Activated B cell treated with CpG ODN at 0.5 μM for 24 hours (primary cell): ENCODE measurements at regions of chr3 and their contacts with region 1.

Region 1: DNA sequence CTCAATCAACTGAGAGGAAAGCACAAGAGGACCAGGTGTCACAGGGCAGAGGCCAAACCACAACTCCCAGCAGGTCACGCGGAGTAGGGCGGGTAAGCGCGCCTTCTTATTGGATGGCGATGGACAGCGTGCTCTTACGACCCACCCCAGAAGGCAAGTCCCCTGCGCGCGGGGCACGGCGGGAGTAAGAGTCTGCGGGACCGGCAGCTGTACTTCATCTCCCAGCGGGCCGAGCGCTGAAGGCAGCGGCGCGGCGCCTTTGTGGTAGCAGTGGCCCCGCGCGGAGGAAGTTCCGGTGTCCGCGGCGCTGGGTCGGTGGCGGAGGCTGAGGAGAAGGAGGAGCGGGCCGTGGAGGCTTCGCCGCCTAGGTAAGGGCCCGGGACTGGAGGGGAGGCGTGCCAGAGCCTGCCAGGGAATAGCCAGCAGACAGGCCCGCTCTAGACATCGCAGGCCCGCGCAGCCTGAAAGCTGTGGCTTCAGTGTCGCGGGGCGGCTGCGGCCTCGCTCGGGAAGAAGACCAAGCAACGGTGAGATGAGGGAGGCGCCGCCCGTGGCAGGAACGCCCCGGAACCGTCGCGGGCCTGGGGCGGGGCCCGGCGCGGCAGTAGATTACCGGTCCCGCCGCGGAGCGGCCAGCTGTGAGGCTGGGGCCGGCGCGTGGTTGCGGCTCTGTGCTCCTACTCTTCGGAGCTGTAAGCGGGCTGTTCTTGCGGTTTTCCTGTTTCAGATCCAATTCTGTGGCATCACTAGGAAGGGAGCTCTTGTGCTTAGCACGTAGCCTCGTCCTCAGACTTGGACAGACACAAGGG is at the start of gene RBM6:
- DNase-seq: peak; percentile 89
- ATAC-seq: peak; percentile 93
- H3K4me3 Mint-ChIP-seq: peak within 1 kb of the TSS; percentile 98
- H3K27ac Mint-ChIP-seq: peak within 1 kb of the TSS; percentile 97
- H3K4me1 Mint-ChIP-seq: peaks cover 43% of the 10 kb centered on the region
- H3K27me3 Mint-ChIP-seq: no peaks in the 10 kb centered on the region
- CTCF ChIP-seq: no peak
- total RNA-seq, gene RBM6: 160 and 172 TPM in 2 replicates

Region 2: GRCh38 chr3:49856181-49857005 is 83.7 kb before region 1 on chr3 and contains the start of gene TRAIP:
- CTCF ChIA-PET with region 1: no interaction called
- POLR2A ChIA-PET with region 1: no interaction called
- intact Hi-C with region 1: loop called (anchors 1 kb)
- DNase-seq: peak; percentile 94
- ATAC-seq: peak; percentile 100
- H3K4me3 Mint-ChIP-seq: peak within 1 kb of the TSS; percentile 86
- H3K27ac Mint-ChIP-seq: peak within 1 kb of the TSS; percentile 80
- H3K4me1 Mint-ChIP-seq: peaks cover 15% of the 10 kb centered on the region
- H3K27me3 Mint-ChIP-seq: peaks cover 3% of the 10 kb centered on the region
- CTCF ChIP-seq: no peak
- total RNA-seq, gene TRAIP: 6.4 TPM in 2 replicates

Region 3: GRCh38 chr3:49929331-49930240 is 10.5 kb before region 1 on chr3 and contains the start of gene MON1A:
- CTCF ChIA-PET with region 1: interaction called, 5 read pairs
- POLR2A ChIA-PET with region 1: interaction called, 72 read pairs
- intact Hi-C with region 1: loop called (anchors 1 kb)
- DNase-seq: peak; percentile 92
- ATAC-seq: peak; percentile 95
- H3K4me3 Mint-ChIP-seq: peak within 1 kb of the TSS; percentile 86
- H3K27ac Mint-ChIP-seq: peak within 1 kb of the TSS; percentile 79
- H3K4me1 Mint-ChIP-seq: peaks cover 16% of the 10 kb centered on the region
- H3K27me3 Mint-ChIP-seq: no peaks in the 10 kb centered on the region
- CTCF ChIP-seq: no peak
- total RNA-seq, gene MON1A: 6.3 and 7.1 TPM in 2 replicates

Region 4: DNA sequence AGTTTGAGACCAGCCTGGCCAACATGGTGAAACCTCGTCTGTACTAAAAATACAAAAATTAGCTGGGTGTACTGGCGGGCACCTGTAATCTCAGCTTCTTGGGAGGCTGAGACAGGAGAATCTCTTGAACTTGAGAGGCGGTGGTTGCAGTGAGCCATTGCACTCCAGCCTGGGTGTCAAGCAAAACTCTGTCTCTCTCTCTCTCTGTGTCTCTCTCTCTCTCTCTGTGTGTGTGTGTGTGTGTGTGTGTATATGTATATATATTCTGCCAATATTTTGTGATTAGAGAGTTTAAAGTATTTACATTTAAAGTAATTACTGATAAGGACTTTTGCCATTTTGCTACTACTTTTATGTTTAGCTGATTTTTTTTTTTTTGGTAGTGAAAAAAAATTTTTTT is 15.6 kb after region 1 on chr3:
- CTCF ChIA-PET with region 1: no interaction called
- POLR2A ChIA-PET with region 1: interaction called, 21 read pairs
- intact Hi-C with region 1: no loop called
- DNase-seq: no peak
- ATAC-seq: no peak
- H3K4me3 Mint-ChIP-seq: no peak overlapping the region
- H3K27ac Mint-ChIP-seq: no peak overlapping the region
- H3K4me1 Mint-ChIP-seq: peaks cover 28% of the 10 kb centered on the region
- H3K27me3 Mint-ChIP-seq: no peaks in the 10 kb centered on the region
- CTCF ChIP-seq: no peak

Region 5: GRCh38 chr3:50088725-50089608 is 148.9 kb after region 1 on chr3 and contains the start of gene RBM5:
- CTCF ChIA-PET with region 1: no interaction called
- POLR2A ChIA-PET with region 1: no interaction called
- intact Hi-C with region 1: loop called (anchors 5 kb)
- DNase-seq: peak; percentile 78
- ATAC-seq: peak; percentile 100
- H3K4me3 Mint-ChIP-seq: peak within 1 kb of the TSS; percentile 98
- H3K27ac Mint-ChIP-seq: peak within 1 kb of the TSS; percentile 97
- H3K4me1 Mint-ChIP-seq: peaks cover 34% of the 10 kb centered on the region
- H3K27me3 Mint-ChIP-seq: no peaks in the 10 kb centered on the region
- CTCF ChIP-seq: no peak
- total RNA-seq, gene RBM5: 261 and 316 TPM in 2 replicates

Region 6: GRCh38 chr3:50292159-50293078 is 352.4 kb after region 1 on chr3 and contains the start of gene IFRD2:
- CTCF ChIA-PET with region 1: no interaction called
- POLR2A ChIA-PET with region 1: no interaction called
- intact Hi-C with region 1: loop called (anchors 1 kb)
- DNase-seq: peak; percentile 87
- ATAC-seq: peak; percentile 99
- H3K4me3 Mint-ChIP-seq: peak within 1 kb of the TSS; percentile 86
- H3K27ac Mint-ChIP-seq: peak within 1 kb of the TSS; percentile 95
- H3K4me1 Mint-ChIP-seq: peaks cover 20% of the 10 kb centered on the region
- H3K27me3 Mint-ChIP-seq: no peaks in the 10 kb centered on the region
- CTCF ChIP-seq: no peak
- total RNA-seq, gene IFRD2: 92.2 and 105 TPM in 2 replicates